CD14-positive monocyte (primary cell): ENCODE measurements at regions of chr1 and their contacts with region 1.

Region 1: DNA sequence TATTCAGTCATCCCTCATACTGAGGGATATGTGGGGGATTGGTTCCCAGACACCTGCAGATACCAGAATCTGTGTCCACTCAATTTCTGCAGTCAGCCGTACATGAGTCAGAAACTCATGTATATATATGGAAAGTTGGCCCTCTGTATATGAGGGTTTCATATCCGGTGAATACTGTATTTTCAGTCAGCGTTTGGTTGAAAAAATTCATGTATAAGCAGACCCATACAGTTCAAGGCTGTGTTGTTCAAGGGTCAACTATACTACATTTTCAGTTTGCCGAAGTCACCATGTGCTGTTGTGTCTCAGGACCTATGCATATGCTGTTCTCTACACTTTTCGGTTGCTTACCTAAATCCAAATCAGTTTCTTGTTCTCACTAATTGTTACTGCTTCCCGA is 10.5 kb downstream of the AXDND1 start:
- DNase-seq: no peak
- H3K4me3 ChIP-seq: no peak overlapping the region
- H3K4me3 Mint-ChIP-seq: no peak overlapping the region
- H3K27ac ChIP-seq: no peak overlapping the region
- H3K27ac Mint-ChIP-seq: no peak overlapping the region
- H3K4me1 ChIP-seq: no peaks in the 10 kb centered on the region
- H3K4me1 Mint-ChIP-seq: no peaks in the 10 kb centered on the region
- H3K27me3 ChIP-seq: no peaks in the 10 kb centered on the region
- H3K27me3 Mint-ChIP-seq: peaks cover 0 to 2% (median 0%) of the 10 kb centered on the region in 3 donors
- CTCF ChIP-seq: no peak

Region 2: DNA sequence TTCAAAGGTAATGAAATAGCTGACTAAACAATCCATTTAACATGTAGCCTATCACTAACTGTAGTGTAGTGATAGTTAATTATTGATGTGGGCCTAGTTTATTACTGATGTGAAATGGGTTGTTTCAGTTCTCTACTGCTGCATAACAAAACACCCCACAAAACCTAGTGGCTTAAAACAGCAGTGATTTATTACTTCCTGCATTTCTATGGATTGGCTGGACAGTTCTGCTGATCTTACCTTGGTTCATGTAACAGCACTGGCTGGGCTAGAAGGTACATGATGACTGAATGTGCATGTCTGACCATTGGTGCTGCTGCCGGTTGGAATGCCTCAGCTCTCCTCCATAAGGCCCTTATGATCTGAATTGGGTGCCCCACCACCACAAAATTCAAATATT is 141.4 kb before region 1 on chr1:
- intact Hi-C with region 1: loop called in 1 of 2 experiments (anchors 5 kb)
- DNase-seq: no peak
- H3K4me3 ChIP-seq: no peak overlapping the region
- H3K4me3 Mint-ChIP-seq: no peak overlapping the region
- H3K27ac ChIP-seq: no peak overlapping the region
- H3K27ac Mint-ChIP-seq: peak overlapping the region in 2 of 7 donors; percentile 48 to 74
- H3K4me1 ChIP-seq: peaks cover 2 to 3% of the 10 kb centered on the region in 2 donors
- H3K4me1 Mint-ChIP-seq: peaks cover 11% of the 10 kb centered on the region
- H3K27me3 ChIP-seq: no peaks in the 10 kb centered on the region
- H3K27me3 Mint-ChIP-seq: peaks cover 0 to 2% (median 0%) of the 10 kb centered on the region in 3 donors
- CTCF ChIP-seq: no peak